Activated CD4-positive, alpha-beta T cell treated with anti-CD3 and anti-CD28 coated beads, Interleukin-2, amount 10 ng/mL, durations not matched to agents 24 days and 14 days (primary cell): ENCODE measurements at regions of chr7 and their contacts with region 1.

Region 1: DNA sequence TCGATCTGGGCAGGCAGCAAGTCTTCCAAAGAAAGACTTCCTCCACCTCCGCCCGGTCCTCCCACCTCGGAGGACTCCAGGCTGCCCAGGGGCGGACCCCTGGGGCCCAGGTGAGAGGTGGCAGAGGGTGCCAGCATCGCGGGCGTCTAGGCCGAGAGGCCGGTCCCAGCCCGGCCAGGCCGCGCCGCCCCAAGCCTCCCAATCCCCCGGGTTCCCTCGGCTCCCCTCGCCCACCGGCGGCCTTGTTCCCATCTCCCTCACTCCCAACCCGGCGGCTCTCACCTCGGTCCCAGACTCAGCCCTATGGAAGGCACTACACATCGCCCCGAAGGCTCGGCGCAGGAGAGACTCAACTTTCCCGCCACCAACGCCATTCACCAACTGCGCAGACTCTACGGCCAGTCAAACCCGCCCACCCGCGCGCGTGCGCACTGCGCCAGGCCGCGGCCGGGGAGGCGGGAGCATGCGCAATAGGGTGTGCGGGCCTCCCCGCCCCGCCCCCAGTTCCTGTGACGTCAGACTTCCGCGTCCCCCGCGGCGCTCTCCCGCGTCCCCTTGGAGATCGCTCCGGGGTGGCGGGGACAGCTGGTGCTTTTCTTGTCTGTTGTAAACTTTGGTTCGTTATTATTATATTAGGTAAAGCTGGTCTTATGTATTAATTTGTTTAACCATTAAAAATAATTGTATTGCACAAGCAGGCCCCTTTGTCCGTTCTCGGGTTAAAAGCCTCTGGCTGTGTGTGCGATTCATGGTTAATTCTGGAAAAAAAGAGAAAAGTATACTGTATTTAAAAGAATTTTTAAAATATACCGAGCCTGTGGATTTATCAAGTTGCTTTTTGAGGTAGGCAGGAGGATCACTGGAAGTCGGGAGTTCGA is at the start of gene XRCC2:
- DNase-seq: peak; percentile 99
- H3K4me3 Mint-ChIP-seq: peak within 1 kb of the TSS; percentile 94
- H3K27ac Mint-ChIP-seq: peak within 1 kb of the TSS; percentile 97
- H3K4me1 Mint-ChIP-seq: peaks cover 14% of the 10 kb centered on the region
- H3K27me3 Mint-ChIP-seq: no peaks in the 10 kb centered on the region
- total RNA-seq, gene XRCC2: 26.2 and 28.5 TPM in 2 replicates

Region 2: GRCh38 chr7:151769188-151769841 is 906.7 kb before region 1 on chr7:
- intact Hi-C with region 1: no loop called
- DNase-seq: peak; percentile 81
- H3K4me3 Mint-ChIP-seq: peak overlapping the region; percentile 75
- H3K27ac Mint-ChIP-seq: peak overlapping the region; percentile 83
- H3K4me1 Mint-ChIP-seq: peaks cover 36% of the 10 kb centered on the region
- H3K27me3 Mint-ChIP-seq: peaks cover 3% of the 10 kb centered on the region

Region 3: DNA sequence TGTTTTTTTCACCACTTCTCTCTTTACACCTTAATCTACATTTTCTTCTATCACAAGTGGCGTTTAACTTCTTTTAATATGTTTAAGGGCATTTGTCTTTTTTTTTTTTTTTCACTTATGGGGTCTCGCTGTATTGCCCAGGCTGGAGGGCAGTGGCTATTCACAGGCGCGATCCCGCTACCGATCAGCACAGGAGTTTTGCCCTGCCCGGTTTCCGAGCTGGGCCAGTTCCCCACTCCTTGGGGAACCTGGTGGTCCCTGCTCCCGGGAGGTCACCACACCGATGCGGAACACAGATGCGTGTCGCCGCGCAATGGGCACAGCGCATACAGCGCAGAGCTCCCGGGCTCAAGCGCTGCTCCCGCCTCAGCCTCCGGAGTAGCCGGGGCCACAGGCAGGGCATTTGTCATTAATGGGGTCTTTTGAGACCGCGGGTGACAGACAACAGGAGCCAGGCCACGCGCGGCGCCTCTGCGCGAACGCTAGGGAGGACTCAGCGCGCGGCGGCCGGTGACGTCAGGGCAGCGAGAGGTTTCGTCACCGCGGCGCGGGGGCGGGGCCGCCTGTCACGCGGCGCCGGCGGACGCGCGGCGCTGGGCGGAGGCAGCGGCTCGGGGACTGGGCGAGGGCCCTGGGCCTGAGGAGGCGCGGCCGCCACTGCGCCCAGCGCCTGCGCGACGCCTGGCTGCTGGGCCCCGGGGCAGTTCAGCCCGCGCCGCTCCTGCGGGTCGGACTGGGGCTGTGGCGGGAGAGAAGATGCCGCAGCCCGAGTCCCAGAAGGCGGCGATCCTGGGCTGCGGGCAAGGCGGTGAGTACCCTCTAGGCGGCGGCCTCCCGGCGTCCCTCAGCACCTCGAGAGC is 650.7 kb before region 1 on chr7 and contains the start of gene GALNT11:
- intact Hi-C with region 1: loop called (anchors 5 kb)
- DNase-seq: peak; percentile 97
- H3K4me3 Mint-ChIP-seq: peak within 1 kb of the TSS; percentile 88
- H3K27ac Mint-ChIP-seq: peak within 1 kb of the TSS; percentile 85
- H3K4me1 Mint-ChIP-seq: peaks cover 23% of the 10 kb centered on the region
- H3K27me3 Mint-ChIP-seq: peaks cover 16% of the 10 kb centered on the region
- total RNA-seq, gene GALNT11: 22.0 and 22.1 TPM in 2 replicates

Region 4: GRCh38 chr7:152315845-152316244 is 360.2 kb before region 1 on chr7:
- intact Hi-C with region 1: no loop called
- DNase-seq: no peak
- H3K4me3 Mint-ChIP-seq: no peak overlapping the region
- H3K27ac Mint-ChIP-seq: no peak overlapping the region
- H3K4me1 Mint-ChIP-seq: peaks cover 7% of the 10 kb centered on the region
- H3K27me3 Mint-ChIP-seq: no peaks in the 10 kb centered on the region

Region 5: DNA sequence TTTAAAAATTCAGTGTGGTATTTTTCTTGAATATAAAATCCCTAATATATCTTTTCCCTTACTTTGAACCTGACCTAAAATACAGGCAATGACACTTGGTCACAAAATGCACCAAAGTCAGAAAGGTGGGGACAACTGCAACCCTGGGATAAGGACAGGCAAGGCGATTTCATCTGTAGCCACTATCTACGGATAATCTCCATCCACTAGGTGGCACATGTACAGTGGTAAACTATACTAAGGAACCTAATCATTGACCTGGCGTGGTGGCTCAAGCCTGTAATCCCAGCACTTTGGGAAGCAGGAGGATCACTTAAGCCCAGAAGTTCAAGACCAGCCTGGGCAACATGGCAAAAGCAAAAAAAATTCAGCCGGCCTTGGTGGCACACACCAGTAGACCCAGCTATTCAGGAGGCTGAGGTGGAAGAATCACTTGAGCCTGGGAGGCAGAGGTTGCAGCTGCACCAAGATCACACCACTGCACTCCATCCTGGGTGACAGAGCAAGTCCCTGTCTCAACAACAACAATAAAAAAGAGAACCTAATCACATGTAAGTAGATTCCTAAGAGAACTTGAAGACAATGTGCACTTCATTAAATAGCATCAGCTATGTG is 339.1 kb before region 1 on chr7:
- intact Hi-C with region 1: loop called (anchors 5 kb)
- DNase-seq: peak; percentile 76
- H3K4me3 Mint-ChIP-seq: peak overlapping the region; percentile 70
- H3K27ac Mint-ChIP-seq: peak overlapping the region; percentile 64
- H3K4me1 Mint-ChIP-seq: peaks cover 27% of the 10 kb centered on the region
- H3K27me3 Mint-ChIP-seq: no peaks in the 10 kb centered on the region

Region 6: DNA sequence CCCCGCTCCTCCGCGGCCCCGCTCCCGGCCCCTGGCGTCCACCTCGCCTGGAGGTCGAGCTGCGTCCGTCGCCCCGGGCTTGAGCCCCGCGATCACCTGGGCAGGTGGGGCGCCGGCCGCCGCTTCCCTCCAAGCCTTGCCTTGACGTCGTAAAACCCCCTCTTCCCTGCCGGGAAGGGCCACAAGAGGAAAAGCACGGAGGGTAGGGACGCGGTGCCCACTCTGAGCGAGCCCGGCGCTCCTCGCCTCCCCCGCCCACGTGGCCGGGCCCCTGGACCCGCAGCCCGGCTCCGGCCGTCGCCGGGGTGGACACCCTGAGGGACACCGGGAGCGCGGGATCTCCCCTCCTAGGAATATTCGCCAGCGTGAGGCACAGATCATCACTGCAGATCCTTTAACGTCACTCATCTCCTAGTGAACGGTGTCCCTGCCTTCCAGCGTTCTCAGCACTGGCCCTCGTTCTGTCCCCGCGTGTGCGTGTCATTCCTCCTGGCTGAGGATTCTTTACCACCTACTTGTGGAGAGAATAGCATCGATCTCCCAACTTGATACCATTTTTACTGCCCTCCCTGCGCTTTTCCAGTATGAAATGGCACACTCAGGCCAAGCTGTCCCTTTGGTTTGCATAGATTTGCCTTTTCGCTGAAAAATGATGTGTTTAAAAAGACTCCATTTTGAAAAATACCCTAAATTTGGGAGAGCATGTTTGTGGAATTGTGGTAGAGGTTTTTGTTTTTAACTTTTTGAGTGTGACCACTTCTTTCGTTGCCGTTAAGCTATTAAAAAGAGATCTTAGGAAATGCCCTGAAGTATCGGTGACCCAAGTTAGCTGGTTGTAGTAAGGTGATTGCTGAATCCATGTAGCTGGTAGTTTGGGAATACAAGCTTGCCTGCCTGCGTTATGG is 84.2 kb after region 1 on chr7:
- intact Hi-C with region 1: loop called (anchors 1 kb)
- DNase-seq: no peak
- H3K4me3 Mint-ChIP-seq: peak overlapping the region; percentile 81
- H3K27ac Mint-ChIP-seq: peak overlapping the region; percentile 54
- H3K4me1 Mint-ChIP-seq: peaks cover 13% of the 10 kb centered on the region
- H3K27me3 Mint-ChIP-seq: peaks cover 4% of the 10 kb centered on the region